CD4-positive, alpha-beta T cell (primary cell): ENCODE measurements at regions of chr11 and their contacts with region 1.

Region 1: DNA sequence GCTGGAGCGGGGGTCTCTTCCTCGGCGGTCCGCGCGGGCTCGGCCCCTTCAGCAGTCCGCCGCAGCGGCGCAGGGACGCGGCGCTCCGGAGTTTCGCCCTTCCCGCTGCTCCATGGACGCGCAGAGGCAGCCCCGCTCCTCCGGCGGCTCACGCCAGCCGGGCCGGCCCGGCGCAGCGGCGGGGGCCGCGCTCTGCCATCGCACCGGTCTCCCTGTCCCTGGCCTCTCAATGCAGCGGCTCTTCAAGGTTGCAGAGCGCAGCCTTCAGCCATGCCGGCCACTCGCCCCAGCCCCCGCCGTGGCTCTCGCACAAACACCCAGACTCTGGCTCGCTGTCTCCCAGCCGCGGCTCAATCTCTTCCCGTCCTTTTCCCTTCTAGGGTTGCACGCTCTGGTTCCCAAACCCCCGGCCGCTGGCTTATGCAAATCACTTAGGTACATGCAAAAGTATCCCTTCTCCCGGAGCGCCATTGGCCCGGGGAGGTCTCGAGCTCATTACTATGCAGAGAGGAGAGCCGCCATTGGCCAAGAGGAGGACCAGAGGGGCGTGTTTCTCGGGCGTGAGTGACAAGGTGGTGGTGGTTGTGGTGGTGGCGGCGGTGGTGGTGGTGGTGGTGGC is at the start of gene LGR4:
- DNase-seq: peak; percentile 53 to 85 (median 66)
- ATAC-seq: peak; percentile 92
- H3K4me3 ChIP-seq: peak within 1 kb of the TSS; percentile 71
- H3K4me3 Mint-ChIP-seq: peak within 1 kb of the TSS; percentile 93
- H3K27ac ChIP-seq: no peak within 1 kb of the TSS
- H3K27ac Mint-ChIP-seq: peak within 1 kb of the TSS; percentile 7
- H3K4me1 ChIP-seq: peaks cover 17% of the 10 kb centered on the region
- H3K4me1 Mint-ChIP-seq: peaks cover 24% of the 10 kb centered on the region
- H3K27me3 ChIP-seq: peaks cover 8 to 18% of the 10 kb centered on the region in 2 experiments
- H3K27me3 Mint-ChIP-seq: peaks cover 24% of the 10 kb centered on the region
- CTCF ChIP-seq: no peak
- total RNA-seq, gene LGR4: 0.69 to 0.87 TPM

Region 2: GRCh38 chr11:27362749-27363575 is 109.5 kb before region 1 on chr11 and contains the start of gene CCDC34:
- CTCF ChIA-PET with region 1: no interaction called
- POLR2A ChIA-PET with region 1: interaction called, 4 read pairs
- intact Hi-C with region 1: loop called (anchors 5 to 10 kb)
- DNase-seq: peak; percentile 70 to 96 (median 87)
- ATAC-seq: peak; percentile 98
- H3K4me3 ChIP-seq: peak within 1 kb of the TSS; percentile 83
- H3K4me3 Mint-ChIP-seq: peak within 1 kb of the TSS; percentile 81
- H3K27ac ChIP-seq: no peak within 1 kb of the TSS
- H3K27ac Mint-ChIP-seq: peak within 1 kb of the TSS; percentile 72
- H3K4me1 ChIP-seq: peaks cover 13% of the 10 kb centered on the region
- H3K4me1 Mint-ChIP-seq: peaks cover 30% of the 10 kb centered on the region
- H3K27me3 ChIP-seq: no peaks in the 10 kb centered on the region
- H3K27me3 Mint-ChIP-seq: no peaks in the 10 kb centered on the region
- CTCF ChIP-seq: no peak
- total RNA-seq, gene CCDC34: 1.3 to 1.6 TPM